ENCODE measurements at regions of chr7 and their contacts with region 1.

Region 1: DNA sequence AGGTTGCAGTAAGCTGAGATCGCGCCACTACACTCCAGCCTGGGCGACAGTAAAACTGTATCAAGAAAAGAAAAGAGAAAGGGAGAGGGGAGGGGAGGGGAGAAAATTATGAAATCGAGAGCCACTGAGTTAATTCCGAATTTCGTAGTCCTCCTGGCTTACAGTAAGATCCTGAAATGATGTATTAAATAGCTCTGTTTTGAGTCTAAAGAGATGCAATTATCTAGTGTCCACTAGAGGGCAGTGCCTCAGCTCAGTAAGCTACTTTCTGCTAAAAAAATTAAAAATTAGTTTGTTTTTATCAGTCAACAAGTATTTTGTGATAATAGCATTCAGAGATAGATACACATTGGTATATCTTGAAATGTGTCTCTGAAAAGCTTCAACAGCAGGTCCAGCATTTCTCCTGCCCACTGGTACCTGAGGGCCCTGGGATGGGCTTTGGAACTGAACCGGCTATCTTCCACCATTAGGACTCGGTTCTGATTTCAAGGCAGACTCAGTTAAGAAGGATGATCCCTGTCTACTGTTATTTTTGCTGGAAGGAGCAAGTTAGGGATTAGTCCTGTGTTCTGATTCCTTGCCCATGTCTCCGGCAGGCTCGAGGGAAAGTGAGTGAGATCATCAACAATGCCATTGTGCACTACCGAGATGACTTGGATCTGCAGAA is 19.5 kb downstream of the TSPAN33 start:
- DNase-seq: peak; percentile 61
- H3K4me3 ChIP-seq: no peak overlapping the region
- H3K27ac ChIP-seq: no peak overlapping the region
- H3K4me1 ChIP-seq: no peaks in the 10 kb centered on the region
- H3K27me3 ChIP-seq: peaks cover 15 to 19% of the 10 kb centered on the region in 2 experiments
- CTCF ChIP-seq: peak; percentile 56 to 61
- POLR2A ChIP-seq: no peak

Region 2: GRCh38 chr7:129118182-129118581 is 45.8 kb before region 1 on chr7:
- CTCF ChIA-PET with region 1: interaction called, 12 read pairs
- POLR2A ChIA-PET with region 1: no interaction called
- dilution Hi-C with region 1: no loop called
- intact Hi-C with region 1: no loop called
- DNase-seq: no peak
- H3K4me3 ChIP-seq: no peak overlapping the region
- H3K27ac ChIP-seq: no peak overlapping the region
- H3K4me1 ChIP-seq: no peaks in the 10 kb centered on the region
- H3K27me3 ChIP-seq: peaks cover 4 to 8% of the 10 kb centered on the region in 2 experiments
- CTCF ChIP-seq: no peak
- POLR2A ChIP-seq: no peak

Region 3: GRCh38 chr7:129144095-129144833 is 19.7 kb before region 1 on chr7 and contains the start of gene TSPAN33:
- CTCF ChIA-PET with region 1: interaction called, 50 read pairs
- POLR2A ChIA-PET with region 1: no interaction called
- dilution Hi-C with region 1: no loop called
- intact Hi-C with region 1: no loop called
- DNase-seq: peak; percentile 26
- H3K4me3 ChIP-seq: peak within 1 kb of the TSS in 2 of 3 experiments; percentile 27 to 29
- H3K27ac ChIP-seq: no peak within 1 kb of the TSS
- H3K4me1 ChIP-seq: peaks cover 9% of the 10 kb centered on the region
- H3K27me3 ChIP-seq: peaks cover 39 to 43% of the 10 kb centered on the region in 2 experiments
- CTCF ChIP-seq: no peak
- POLR2A ChIP-seq: no peak
- total RNA-seq, gene TSPAN33: 0.16 TPM in 1 of 2 replicates, not detected in the other

Region 4: DNA sequence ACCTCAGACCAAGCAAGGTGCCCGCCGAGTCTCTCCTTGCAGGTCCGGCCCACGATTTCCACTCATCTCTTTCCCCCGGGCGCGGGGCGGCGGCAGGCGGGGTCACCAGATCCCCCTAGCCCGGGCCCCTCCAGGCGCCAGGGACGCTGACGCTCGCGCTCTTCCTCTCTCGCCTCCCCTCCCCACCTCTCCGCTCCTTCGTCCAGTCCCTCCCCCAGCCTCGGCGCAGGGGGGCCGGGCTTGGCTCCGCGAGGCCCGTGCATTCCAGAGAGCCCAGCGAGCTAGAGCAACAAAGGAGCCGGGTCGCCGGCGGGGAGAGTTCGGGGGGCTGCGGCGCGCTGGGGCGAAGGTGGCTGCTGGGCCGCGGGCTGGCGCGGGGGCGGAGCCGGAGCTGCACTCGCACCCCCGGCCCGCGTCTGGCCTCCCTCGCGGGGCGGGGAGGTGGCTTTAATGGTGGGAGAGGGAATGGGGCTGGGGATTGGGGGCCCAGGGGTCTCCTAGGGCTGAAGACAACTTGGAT is 24.4 kb after region 1 on chr7 and contains the start of gene SMO:
- CTCF ChIA-PET with region 1: interaction called, 32 read pairs
- POLR2A ChIA-PET with region 1: no interaction called
- dilution Hi-C with region 1: no loop called
- intact Hi-C with region 1: no loop called
- DNase-seq: peak; percentile 61
- H3K4me3 ChIP-seq: peak within 1 kb of the TSS; percentile 34 to 79 (median 42)
- H3K27ac ChIP-seq: no peak within 1 kb of the TSS
- H3K4me1 ChIP-seq: peaks cover 4% of the 10 kb centered on the region
- H3K27me3 ChIP-seq: peaks cover 5 to 11% of the 10 kb centered on the region in 2 experiments
- CTCF ChIP-seq: no peak
- POLR2A ChIP-seq: no peak
- total RNA-seq, gene SMO: 13.0 and 13.2 TPM in 2 replicates

Region 5: DNA sequence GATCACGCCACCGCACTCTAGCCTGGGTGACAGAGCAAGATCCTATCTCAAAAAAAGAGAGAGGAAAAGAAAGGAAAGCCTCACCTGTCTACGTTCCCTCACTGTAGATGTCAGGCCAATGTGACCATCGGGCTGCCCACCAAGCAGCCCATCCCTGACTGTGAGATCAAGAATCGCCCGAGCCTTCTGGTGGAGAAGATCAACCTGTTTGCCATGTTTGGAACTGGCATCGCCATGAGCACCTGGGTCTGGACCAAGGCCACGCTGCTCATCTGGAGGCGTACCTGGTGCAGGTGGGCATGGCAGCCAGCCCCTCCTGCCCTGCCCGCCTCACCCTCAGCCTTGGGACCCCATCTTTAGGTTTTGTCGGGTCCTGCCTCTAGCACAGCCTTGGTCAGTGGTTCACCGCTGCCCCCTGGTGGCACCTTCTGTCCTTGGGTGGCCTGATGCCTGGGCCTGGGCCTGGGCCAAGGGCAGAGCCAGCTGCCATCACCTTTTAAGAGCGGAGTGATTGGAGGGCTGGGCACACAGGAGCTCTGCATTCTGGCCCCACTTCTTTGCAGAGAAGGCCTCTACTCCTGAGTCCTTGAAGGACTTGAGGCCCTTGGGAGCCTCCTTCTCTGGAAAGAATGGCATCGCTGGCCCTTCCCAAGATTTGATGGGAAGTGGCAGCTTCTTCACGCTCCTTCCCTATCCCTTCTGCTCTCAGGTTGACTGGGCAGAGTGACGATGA is 46.4 kb after region 1 on chr7:
- CTCF ChIA-PET with region 1: interaction called, 465 read pairs
- POLR2A ChIA-PET with region 1: interaction called, 7 read pairs
- dilution Hi-C with region 1: no loop called
- intact Hi-C with region 1: loop called (anchors 1 kb)
- DNase-seq: peak; percentile 65
- H3K4me3 ChIP-seq: no peak overlapping the region
- H3K27ac ChIP-seq: no peak overlapping the region
- H3K4me1 ChIP-seq: no peaks in the 10 kb centered on the region
- H3K27me3 ChIP-seq: no peaks in the 10 kb centered on the region
- CTCF ChIP-seq: peak; percentile 78 to 93
- POLR2A ChIP-seq: no peak

Region 6: DNA sequence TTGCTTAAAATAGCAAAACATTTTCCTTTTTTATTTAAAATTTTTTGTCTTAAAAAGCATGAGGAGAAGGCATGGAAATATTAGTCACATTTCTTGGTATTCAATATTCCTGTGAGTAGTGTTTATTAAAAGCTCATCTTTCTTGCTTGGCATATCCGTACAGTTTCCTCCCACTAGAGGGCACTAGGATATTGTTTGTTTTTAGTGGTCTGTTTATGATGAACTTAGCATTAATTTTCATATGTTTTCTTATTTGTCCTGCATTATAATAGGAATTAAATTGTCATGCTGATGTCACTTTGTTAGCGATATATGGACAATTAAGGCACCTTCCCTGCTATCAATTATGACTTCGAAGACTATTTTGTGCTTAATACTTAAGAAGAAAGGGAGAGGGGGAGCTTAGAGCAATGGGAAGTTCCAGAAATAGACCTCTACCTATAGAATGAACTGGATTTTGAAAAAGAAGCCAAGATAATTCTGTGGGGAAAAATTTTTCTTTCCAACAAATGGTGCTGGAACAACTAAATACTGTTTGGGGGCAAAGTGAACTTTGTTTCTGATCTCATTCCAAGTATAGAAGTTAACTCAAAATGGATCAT is 179.2 kb after region 1 on chr7:
- CTCF ChIA-PET with region 1: interaction called, 14 read pairs
- POLR2A ChIA-PET with region 1: no interaction called
- dilution Hi-C with region 1: no loop called
- intact Hi-C with region 1: no loop called
- DNase-seq: peak; percentile 68
- H3K4me3 ChIP-seq: no peak overlapping the region
- H3K27ac ChIP-seq: no peak overlapping the region
- H3K4me1 ChIP-seq: no peaks in the 10 kb centered on the region
- H3K27me3 ChIP-seq: no peaks in the 10 kb centered on the region
- CTCF ChIP-seq: peak; percentile 48 to 54
- POLR2A ChIP-seq: no peak

Measured in endothelial cell of umbilical vein (primary cell).